ENCODE measurements at regions of chr11 and their contacts with region 1.

Region 1: GRCh38 chr11:59753650-59754493 is 1.3 kb upstream of the STX3 start:
- DNase-seq: peak; percentile 65 to 91 (median 80)
- ATAC-seq: peak; percentile 61 to 68
- H3K4me3 Mint-ChIP-seq: peak overlapping the region; percentile 86 to 100 (median 94)
- H3K27ac Mint-ChIP-seq: peak overlapping the region; percentile 70 to 90 (median 83)
- H3K4me1 Mint-ChIP-seq: peaks cover 13 to 28% (median 24%) of the 10 kb centered on the region in 4 donors
- H3K27me3 Mint-ChIP-seq: peaks cover 8 to 16% (median 10%) of the 10 kb centered on the region in 5 donors

Region 2: GRCh38 chr11:59689015-59689414 is 64.9 kb before region 1 on chr11:
- POLR2A ChIA-PET with region 1: no interaction called
- DNase-seq: no peak
- ATAC-seq: no peak
- H3K4me3 Mint-ChIP-seq: no peak overlapping the region
- H3K27ac Mint-ChIP-seq: peak overlapping the region in 1 of 10 donors; percentile 35
- H3K4me1 Mint-ChIP-seq: peaks cover 0 to 5% (median under 1%) of the 10 kb centered on the region in 4 donors
- H3K27me3 Mint-ChIP-seq: peaks cover 10 to 47% (median 22%) of the 10 kb centered on the region in 5 donors

Region 3: GRCh38 chr11:59767225-59767611 is 13.3 kb after region 1 on chr11:
- POLR2A ChIA-PET with region 1: interaction called, 13 read pairs
- DNase-seq: peak in 3 of 10 donors; percentile 17 to 34 (median 33)
- ATAC-seq: peak; percentile 39 to 76
- H3K4me3 Mint-ChIP-seq: peak overlapping the region in 7 of 10 donors; percentile 18 to 62 (median 43)
- H3K27ac Mint-ChIP-seq: peak overlapping the region in 8 of 10 donors; percentile 2 to 80 (median 21)
- H3K4me1 Mint-ChIP-seq: peaks cover 12 to 22% (median 16%) of the 10 kb centered on the region in 4 donors
- H3K27me3 Mint-ChIP-seq: no peaks in the 10 kb centered on the region

Region 4: DNA sequence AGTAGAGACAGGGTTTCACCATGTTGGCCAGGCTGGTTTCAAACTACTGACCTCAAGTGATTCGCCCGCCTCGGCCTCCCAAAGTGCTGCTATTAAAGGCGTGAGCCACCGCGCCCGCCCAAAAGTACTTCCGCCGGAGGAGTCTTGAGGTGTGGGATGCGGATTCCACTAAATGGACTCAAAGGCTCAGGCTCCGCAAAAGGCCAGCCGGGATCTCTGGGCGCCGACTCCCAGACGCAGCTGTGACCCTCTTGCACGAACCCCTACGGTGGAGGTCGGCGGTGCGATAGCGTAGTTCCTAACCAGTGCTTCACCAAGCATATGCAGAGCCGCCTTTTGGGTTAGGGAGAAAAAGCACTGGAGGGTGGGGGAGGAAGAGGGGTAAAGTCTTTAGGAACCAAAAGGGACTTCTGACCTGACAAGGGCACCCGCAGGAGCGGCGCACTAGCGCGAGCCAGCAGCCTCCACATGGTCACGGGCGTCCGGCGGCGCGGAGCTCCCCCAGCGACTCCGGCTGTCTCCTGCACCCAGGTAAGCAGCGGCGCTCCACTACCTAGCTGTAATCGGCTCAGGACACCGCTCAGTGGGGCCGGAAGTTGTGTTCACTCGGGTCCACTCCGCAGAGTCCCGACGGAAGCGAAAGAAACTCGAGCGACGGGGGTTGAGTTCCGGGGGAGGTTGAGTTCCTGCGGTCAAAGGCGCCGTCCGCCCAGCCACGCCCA is 56.5 kb after region 1 on chr11 and contains the start of gene MRPL16:
- POLR2A ChIA-PET with region 1: interaction called, 12 read pairs
- DNase-seq: peak; percentile 77 to 94 (median 87)
- ATAC-seq: peak; percentile 99
- H3K4me3 Mint-ChIP-seq: peak within 1 kb of the TSS; percentile 89 to 95 (median 92)
- H3K27ac Mint-ChIP-seq: peak within 1 kb of the TSS; percentile 89 to 95 (median 94)
- H3K4me1 Mint-ChIP-seq: peaks cover 10 to 29% (median 20%) of the 10 kb centered on the region in 4 donors
- H3K27me3 Mint-ChIP-seq: peaks cover 0 to 9% (median 4%) of the 10 kb centered on the region in 5 donors
- polyA plus RNA-seq, gene MRPL16: 68.4 to 93.0 (median 92.8) TPM

Measured in naive thymus-derived CD8-positive, alpha-beta T cell (primary cell).